ENCODE measurements at regions of chr4 and their contacts with region 1.

Region 1: DNA sequence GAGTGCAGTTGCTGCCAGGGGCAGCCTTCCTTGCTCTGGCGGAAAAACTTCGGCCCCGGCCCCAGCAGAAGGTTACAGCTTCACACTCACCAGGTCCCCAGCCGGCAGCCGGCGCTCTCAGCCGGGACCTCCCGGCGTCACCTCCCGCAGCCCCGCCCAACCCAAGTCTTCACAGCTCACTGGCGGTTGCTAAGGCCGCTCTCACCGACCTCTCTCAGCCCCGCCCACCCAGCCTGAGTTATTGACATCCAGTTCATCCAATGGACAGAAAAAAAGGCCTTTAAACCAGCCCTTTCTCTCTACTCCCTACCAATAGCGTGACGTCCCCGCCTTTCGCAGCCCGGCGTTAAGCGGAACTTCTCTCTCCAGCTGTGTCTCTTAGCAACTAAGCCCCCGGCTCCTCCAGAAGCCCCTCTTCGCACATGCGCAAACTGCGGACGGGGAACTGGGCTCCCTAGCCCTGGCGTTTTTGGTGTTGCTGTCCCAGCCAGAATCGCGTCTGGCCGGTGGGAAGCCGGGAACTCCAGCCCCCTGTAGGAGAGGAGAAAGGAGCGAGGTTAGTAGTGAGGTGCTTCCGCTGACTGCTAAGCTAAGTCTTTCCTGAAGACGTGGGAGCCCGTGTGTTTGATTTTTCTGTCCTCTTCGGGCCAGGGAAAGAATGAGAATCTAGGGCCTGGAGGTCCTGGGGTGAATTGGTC is at the start of gene BBS12:
- DNase-seq: peak; percentile 96 to 99 (median 98)
- ATAC-seq: peak; percentile 97
- H3K4me3 ChIP-seq: peak within 1 kb of the TSS; percentile 75
- H3K4me3 Mint-ChIP-seq: peak within 1 kb of the TSS; percentile 97
- H3K27ac ChIP-seq: peak within 1 kb of the TSS; percentile 84 to 91
- H3K27ac Mint-ChIP-seq: peak within 1 kb of the TSS; percentile 96
- H3K4me1 ChIP-seq: peaks cover 12% of the 10 kb centered on the region
- H3K4me1 Mint-ChIP-seq: peaks cover 25% of the 10 kb centered on the region
- H3K27me3 ChIP-seq: no peaks in the 10 kb centered on the region
- H3K27me3 Mint-ChIP-seq: no peaks in the 10 kb centered on the region
- CTCF ChIP-seq: no peak
- total RNA-seq, gene BBS12: 0.80 to 0.84 TPM

Region 2: DNA sequence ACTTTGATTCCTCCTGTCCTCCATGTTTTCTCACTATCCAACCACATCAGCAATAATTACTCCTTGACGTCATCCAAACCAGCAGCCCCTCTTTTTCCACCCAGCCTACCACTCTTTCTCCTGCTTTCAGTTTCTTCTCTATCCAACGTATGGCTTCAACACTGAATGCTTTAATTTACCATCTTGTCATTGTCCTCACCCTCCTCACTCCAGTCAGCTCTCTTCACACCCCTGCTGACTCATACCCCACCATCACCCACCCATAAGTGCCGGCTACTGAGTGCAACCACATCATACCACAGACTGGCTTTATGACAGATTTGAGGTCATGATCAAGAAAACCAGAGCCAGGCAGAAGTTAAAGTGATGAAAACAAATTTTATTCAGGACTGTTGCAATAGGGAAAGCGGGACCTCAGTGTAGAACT is 1025.9 kb before region 1 on chr4:
- CTCF ChIA-PET with region 1: no interaction called
- POLR2A ChIA-PET with region 1: no interaction called
- intact Hi-C with region 1: loop called in 1 of 2 experiments (anchors 10 kb)
- DNase-seq: peak in 4 of 14 experiments; percentile 13 to 72 (median 48)
- ATAC-seq: peak; percentile 34
- H3K4me3 ChIP-seq: no peak overlapping the region
- H3K4me3 Mint-ChIP-seq: no peak overlapping the region
- H3K27ac ChIP-seq: no peak overlapping the region
- H3K27ac Mint-ChIP-seq: no peak overlapping the region
- H3K4me1 ChIP-seq: peaks cover 7% of the 10 kb centered on the region
- H3K4me1 Mint-ChIP-seq: peaks cover 4% of the 10 kb centered on the region
- H3K27me3 ChIP-seq: peaks cover 4 to 15% of the 10 kb centered on the region in 2 experiments
- H3K27me3 Mint-ChIP-seq: peaks cover 48% of the 10 kb centered on the region
- CTCF ChIP-seq: no peak

Region 3: GRCh38 chr4:121950212-121950679 is 782.2 kb before region 1 on chr4:
- CTCF ChIA-PET with region 1: no interaction called
- POLR2A ChIA-PET with region 1: no interaction called
- intact Hi-C with region 1: loop called in 1 of 2 experiments (anchors 10 kb)
- DNase-seq: peak; percentile 67 to 89 (median 80)
- ATAC-seq: peak; percentile 80
- H3K4me3 ChIP-seq: peak overlapping the region; percentile 73
- H3K4me3 Mint-ChIP-seq: peak overlapping the region; percentile 84
- H3K27ac ChIP-seq: no peak overlapping the region
- H3K27ac Mint-ChIP-seq: no peak overlapping the region
- H3K4me1 ChIP-seq: peaks cover 16% of the 10 kb centered on the region
- H3K4me1 Mint-ChIP-seq: peaks cover 9% of the 10 kb centered on the region
- H3K27me3 ChIP-seq: peaks cover 10 to 28% of the 10 kb centered on the region in 2 experiments
- H3K27me3 Mint-ChIP-seq: peaks cover 62% of the 10 kb centered on the region
- CTCF ChIP-seq: peak; percentile 81

Region 4: DNA sequence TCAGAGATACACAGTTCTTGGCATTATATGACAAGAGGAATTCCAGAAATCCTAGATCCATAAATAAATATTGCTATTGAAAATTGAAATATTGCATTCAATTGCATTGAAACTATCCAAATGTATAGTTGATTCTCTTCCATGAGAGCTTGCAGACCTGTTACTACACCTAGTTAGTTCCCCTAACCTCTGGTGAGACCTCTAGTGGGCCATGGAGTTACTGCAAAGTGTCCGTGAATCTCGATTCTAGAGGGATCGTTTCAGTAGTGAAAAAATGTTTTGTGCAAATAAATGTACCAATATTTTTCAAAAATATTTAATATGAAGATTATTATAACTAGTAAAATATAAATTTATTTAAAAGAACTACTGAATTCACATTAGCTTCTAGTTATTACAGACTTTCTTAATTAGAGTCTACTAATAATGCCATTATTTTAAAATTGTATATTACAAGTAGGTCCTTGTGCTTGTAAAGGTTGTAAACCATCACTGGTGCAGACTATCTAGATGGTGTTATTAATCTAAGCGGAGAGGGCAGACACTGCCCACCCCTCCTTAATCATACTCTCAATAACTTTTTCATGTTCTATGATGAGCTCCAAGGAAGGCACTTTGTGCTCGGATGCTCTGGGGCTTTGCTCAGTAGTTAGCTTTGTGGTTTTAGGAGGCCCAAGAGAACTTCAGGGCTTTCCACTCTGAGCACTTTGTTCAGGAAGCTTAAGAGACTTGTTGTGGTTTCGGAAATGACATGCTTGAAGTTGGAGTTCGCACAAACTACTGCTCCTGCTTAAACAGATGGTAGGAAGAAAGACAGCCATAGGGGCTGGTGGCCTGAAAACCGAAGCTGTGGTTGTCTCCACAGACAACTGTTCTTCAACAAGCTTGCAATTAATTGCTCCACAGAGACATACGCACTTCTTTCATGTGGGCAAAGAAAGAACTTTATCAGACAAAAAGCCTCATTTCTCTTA is 154.4 kb before region 1 on chr4:
- CTCF ChIA-PET with region 1: interaction called, 9 read pairs
- POLR2A ChIA-PET with region 1: interaction called, 9 read pairs
- intact Hi-C with region 1: loop called in 1 of 2 experiments (anchors 10 kb)
- DNase-seq: peak; percentile 35 to 93 (median 58)
- ATAC-seq: peak; percentile 82
- H3K4me3 ChIP-seq: peak overlapping the region; percentile 19
- H3K4me3 Mint-ChIP-seq: peak overlapping the region; percentile 57
- H3K27ac ChIP-seq: peak overlapping the region; percentile 67 to 73
- H3K27ac Mint-ChIP-seq: peak overlapping the region; percentile 90
- H3K4me1 ChIP-seq: peaks cover 23% of the 10 kb centered on the region
- H3K4me1 Mint-ChIP-seq: peaks cover 44% of the 10 kb centered on the region
- H3K27me3 ChIP-seq: no peaks in the 10 kb centered on the region
- H3K27me3 Mint-ChIP-seq: no peaks in the 10 kb centered on the region
- CTCF ChIP-seq: peak; percentile 82

Region 5: GRCh38 chr4:122922877-122923511 is 190.5 kb after region 1 on chr4:
- CTCF ChIA-PET with region 1: interaction called, 8 read pairs
- POLR2A ChIA-PET with region 1: interaction called, 19 read pairs
- intact Hi-C with region 1: loop called (anchors 2 kb)
- DNase-seq: peak; percentile 68 to 93 (median 84)
- ATAC-seq: peak; percentile 98
- H3K4me3 ChIP-seq: peak overlapping the region; percentile 69
- H3K4me3 Mint-ChIP-seq: peak overlapping the region; percentile 98
- H3K27ac ChIP-seq: peak overlapping the region; percentile 57 to 62
- H3K27ac Mint-ChIP-seq: no peak overlapping the region
- H3K4me1 ChIP-seq: peaks cover 9% of the 10 kb centered on the region
- H3K4me1 Mint-ChIP-seq: peaks cover 8% of the 10 kb centered on the region
- H3K27me3 ChIP-seq: no peaks in the 10 kb centered on the region
- H3K27me3 Mint-ChIP-seq: no peaks in the 10 kb centered on the region
- CTCF ChIP-seq: no peak

Measured in CD4-positive, alpha-beta T cell (primary cell).